CD4-positive, alpha-beta memory T cell (primary cell): ENCODE measurements at regions of chr19 and their contacts with region 1.

Region 1: DNA sequence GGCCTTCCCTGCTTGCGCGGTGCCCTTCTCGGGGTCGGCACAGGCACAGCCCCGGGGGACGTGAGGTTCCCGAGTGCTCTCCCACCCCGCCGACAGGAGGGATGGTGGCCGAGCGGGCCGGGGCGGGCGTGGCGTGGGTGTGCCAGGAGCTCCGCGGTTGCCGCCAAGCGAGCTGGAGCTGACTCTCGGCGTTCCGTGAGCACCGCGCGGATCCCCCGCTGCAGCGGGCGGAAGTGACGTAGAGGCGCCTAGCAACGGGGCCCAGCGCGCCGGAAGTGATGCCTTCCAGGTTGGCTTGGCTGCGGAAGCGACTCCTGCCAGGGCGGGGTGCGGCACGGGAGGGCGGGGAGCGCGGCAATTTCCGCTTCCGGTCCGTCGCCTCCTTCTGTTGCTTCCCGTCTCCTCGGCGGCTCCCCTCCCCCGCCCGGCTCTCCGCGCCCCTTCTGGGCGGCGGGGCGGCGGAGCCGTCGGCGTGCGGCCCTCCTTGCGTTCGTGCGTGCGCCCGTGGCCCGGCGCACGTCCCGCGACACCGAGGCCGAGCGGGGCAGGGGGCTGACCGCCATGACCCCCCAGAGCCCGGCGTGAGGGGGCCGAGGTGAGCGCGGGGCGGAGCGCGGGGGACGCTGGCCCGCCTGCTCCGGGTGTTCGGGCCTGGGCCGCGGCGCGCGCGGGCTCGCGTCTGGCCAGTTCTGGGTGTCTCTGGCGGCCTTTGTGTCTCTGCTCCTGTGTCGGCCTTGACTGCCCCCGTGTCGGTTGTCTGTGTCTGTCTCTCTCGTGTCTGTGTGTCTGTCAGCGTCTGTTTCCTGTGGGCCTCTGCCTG is at the start of gene EPN1:
- DNase-seq: peak; percentile 94 to 98 (median 97)
- H3K4me3 ChIP-seq: peak within 1 kb of the TSS; percentile 79 to 98
- H3K4me3 Mint-ChIP-seq: peak within 1 kb of the TSS; percentile 94 to 100 (median 97)
- H3K27ac ChIP-seq: peak within 1 kb of the TSS; percentile 94
- H3K27ac Mint-ChIP-seq: peak within 1 kb of the TSS; percentile 94 to 100 (median 99)
- H3K4me1 ChIP-seq: peaks cover 63% of the 10 kb centered on the region
- H3K4me1 Mint-ChIP-seq: peaks cover 32 to 74% (median 55%) of the 10 kb centered on the region in 4 donors
- H3K27me3 ChIP-seq: no peaks in the 10 kb centered on the region
- H3K27me3 Mint-ChIP-seq: no peaks in the 10 kb centered on the region
- total RNA-seq, gene EPN1: 53.9 to 56.9 TPM

Region 2: GRCh38 chr19:55643348-55644176 is 31.5 kb before region 1 on chr19 and contains the start of gene ZNF581:
- CTCF ChIA-PET with region 1: no interaction called
- POLR2A ChIA-PET with region 1: interaction called, 5 read pairs
- intact Hi-C with region 1: loop called (anchors 1 kb)
- DNase-seq: peak; percentile 77 to 85 (median 79)
- H3K4me3 ChIP-seq: peak within 1 kb of the TSS; percentile 53 to 83
- H3K4me3 Mint-ChIP-seq: peak within 1 kb of the TSS; percentile 86 to 96 (median 92)
- H3K27ac ChIP-seq: peak within 1 kb of the TSS; percentile 69
- H3K27ac Mint-ChIP-seq: peak within 1 kb of the TSS; percentile 87 to 99 (median 94)
- H3K4me1 ChIP-seq: peaks cover 49% of the 10 kb centered on the region
- H3K4me1 Mint-ChIP-seq: peaks cover 29 to 62% (median 45%) of the 10 kb centered on the region in 4 donors
- H3K27me3 ChIP-seq: no peaks in the 10 kb centered on the region
- H3K27me3 Mint-ChIP-seq: no peaks in the 10 kb centered on the region
- total RNA-seq, gene ZNF581: 21.2 to 23.4 TPM